SK-N-SH (cell line): ENCODE measurements at regions of chr12 and their contacts with region 1.

Region 1: GRCh38 chr12:20369305-20370005 is 1.1 kb downstream of the PDE3A start:
- DNase-seq: peak; percentile 74
- H3K4me3 ChIP-seq: peak overlapping the region; percentile 90 to 98
- H3K27ac ChIP-seq: peak overlapping the region; percentile 95 to 96
- H3K4me1 ChIP-seq: peaks cover 0 to 14% of the 10 kb centered on the region in 2 experiments; a peak in 3 of 4 replicates
- H3K27me3 ChIP-seq: no peaks in the 10 kb centered on the region
- CTCF ChIP-seq: peak; percentile 18; the same call in 1 of the 2 replicates
- EP300 ChIP-seq: no peak
- RAD21 ChIP-seq: no peak

Region 2: GRCh38 chr12:20317554-20317953 is 51.9 kb before region 1 on chr12:
- CTCF ChIA-PET with region 1: no interaction called
- POLR2A ChIA-PET with region 1: no interaction called
- DNase-seq: no peak
- H3K4me3 ChIP-seq: no peak overlapping the region
- H3K27ac ChIP-seq: no peak overlapping the region
- H3K4me1 ChIP-seq: no peaks in the 10 kb centered on the region; a peak in 2 of 4 replicates
- H3K27me3 ChIP-seq: no peaks in the 10 kb centered on the region
- CTCF ChIP-seq: no peak
- EP300 ChIP-seq: no peak
- RAD21 ChIP-seq: no peak

Region 3: DNA sequence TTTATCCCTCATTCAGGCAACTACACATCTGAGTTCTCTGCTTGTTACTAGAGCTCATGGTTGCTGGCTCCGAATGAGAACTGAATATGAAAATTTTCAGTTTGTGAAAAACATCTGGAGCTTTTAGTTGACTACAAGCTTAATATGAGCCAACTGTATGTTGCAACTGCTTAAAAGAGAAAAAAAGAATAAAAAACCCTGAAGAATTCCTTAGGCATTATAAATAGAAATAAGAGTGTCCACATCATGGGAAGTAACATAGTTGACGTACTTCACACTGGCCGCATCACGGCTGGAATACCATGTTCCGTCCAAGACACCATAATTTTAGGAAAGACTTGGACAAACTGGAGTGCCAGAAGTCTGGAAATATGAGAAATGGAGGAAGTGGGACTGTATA is 56.7 kb after region 1 on chr12:
- CTCF ChIA-PET with region 1: no interaction called
- POLR2A ChIA-PET with region 1: no interaction called
- DNase-seq: no peak
- H3K4me3 ChIP-seq: no peak overlapping the region
- H3K27ac ChIP-seq: no peak overlapping the region
- H3K4me1 ChIP-seq: no peaks in the 10 kb centered on the region; a peak in 1 of 4 replicates
- H3K27me3 ChIP-seq: no peaks in the 10 kb centered on the region
- CTCF ChIP-seq: no peak
- EP300 ChIP-seq: no peak
- RAD21 ChIP-seq: no peak

Region 4: DNA sequence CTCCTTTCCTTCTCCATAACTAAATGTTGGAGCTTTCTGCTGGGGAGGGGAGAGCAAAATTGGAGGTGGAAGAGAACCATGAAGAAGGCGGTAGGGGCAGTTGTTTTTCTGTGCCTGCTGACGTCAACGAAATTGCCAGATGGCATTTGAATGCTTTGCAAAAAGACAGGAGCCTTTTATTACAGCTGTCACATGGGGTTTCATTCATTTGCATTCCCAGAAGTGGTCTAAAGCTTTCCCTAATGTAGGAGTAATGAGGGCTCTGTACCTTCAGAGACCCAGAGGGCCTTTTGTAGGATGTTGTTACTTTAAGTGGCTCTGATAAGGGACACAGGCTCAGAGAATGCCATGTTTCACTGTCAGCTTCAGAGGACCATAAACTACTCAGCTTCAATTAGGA is 218.6 kb after region 1 on chr12:
- CTCF ChIA-PET with region 1: interaction called, 6 read pairs
- POLR2A ChIA-PET with region 1: interaction called, 19 read pairs
- DNase-seq: peak; percentile 79
- H3K4me3 ChIP-seq: no peak overlapping the region
- H3K27ac ChIP-seq: peak overlapping the region in 1 of 2 experiments; percentile 98; a peak in 3 of 4 replicates
- H3K4me1 ChIP-seq: peaks cover 0 to 26% of the 10 kb centered on the region in 2 experiments; a peak in 2 of 4 replicates
- H3K27me3 ChIP-seq: no peaks in the 10 kb centered on the region
- CTCF ChIP-seq: no peak
- EP300 ChIP-seq: peak in 1 of 2 experiments; percentile 99; a peak in 2 of 4 replicates
- RAD21 ChIP-seq: no peak; the same call in 1 of the 2 replicates

Region 5: GRCh38 chr12:20751046-20751445 is 381.6 kb after region 1 on chr12:
- CTCF ChIA-PET with region 1: no interaction called
- POLR2A ChIA-PET with region 1: no interaction called
- DNase-seq: no peak
- H3K4me3 ChIP-seq: no peak overlapping the region
- H3K27ac ChIP-seq: no peak overlapping the region
- H3K4me1 ChIP-seq: no peaks in the 10 kb centered on the region
- H3K27me3 ChIP-seq: no peaks in the 10 kb centered on the region
- CTCF ChIP-seq: no peak
- EP300 ChIP-seq: no peak
- RAD21 ChIP-seq: no peak